ENCODE measurements at regions of chr10 and their contacts with region 1.

Region 1: GRCh38 chr10:11165591-11166543 is 148.2 kb downstream of the CELF2 start:
- DNase-seq: peak; percentile 42 to 92 (median 71)
- ATAC-seq: peak; percentile 62
- H3K4me3 ChIP-seq: peak overlapping the region; percentile 74 to 88
- H3K4me3 Mint-ChIP-seq: no peak overlapping the region
- H3K27ac ChIP-seq: peak overlapping the region; percentile 79 to 89
- H3K27ac Mint-ChIP-seq: no peak overlapping the region
- H3K4me1 ChIP-seq: peaks cover 53% of the 10 kb centered on the region
- H3K4me1 Mint-ChIP-seq: peaks cover 40% of the 10 kb centered on the region
- H3K27me3 ChIP-seq: no peaks in the 10 kb centered on the region
- H3K27me3 Mint-ChIP-seq: no peaks in the 10 kb centered on the region
- CTCF ChIP-seq: peak; percentile 75

Region 2: GRCh38 chr10:11145495-11145855 is 20.4 kb before region 1 on chr10:
- CTCF ChIA-PET with region 1: interaction called, 202 read pairs
- POLR2A ChIA-PET with region 1: interaction called, 319 read pairs
- intact Hi-C with region 1: loop called (anchors 1 kb)
- DNase-seq: peak in 8 of 9 experiments; percentile 61 to 90 (median 78)
- ATAC-seq: peak; percentile 62
- H3K4me3 ChIP-seq: peak overlapping the region; percentile 18 to 30
- H3K4me3 Mint-ChIP-seq: peak overlapping the region; percentile 66
- H3K27ac ChIP-seq: peak overlapping the region; percentile 53 to 88
- H3K27ac Mint-ChIP-seq: peak overlapping the region; percentile 95
- H3K4me1 ChIP-seq: peaks cover 96% of the 10 kb centered on the region
- H3K4me1 Mint-ChIP-seq: peaks cover 97% of the 10 kb centered on the region
- H3K27me3 ChIP-seq: no peaks in the 10 kb centered on the region
- H3K27me3 Mint-ChIP-seq: no peaks in the 10 kb centered on the region
- CTCF ChIP-seq: no peak

Region 3: GRCh38 chr10:11150879-11151415 is 14.9 kb before region 1 on chr10:
- CTCF ChIA-PET with region 1: interaction called, 202 read pairs
- POLR2A ChIA-PET with region 1: interaction called, 319 read pairs
- intact Hi-C with region 1: loop called (anchors 1 kb)
- DNase-seq: peak in 2 of 9 experiments; percentile 64 to 76
- ATAC-seq: no peak
- H3K4me3 ChIP-seq: peak overlapping the region; percentile 32 to 36
- H3K4me3 Mint-ChIP-seq: peak overlapping the region; percentile 69
- H3K27ac ChIP-seq: peak overlapping the region; percentile 88 to 89
- H3K27ac Mint-ChIP-seq: peak overlapping the region; percentile 95
- H3K4me1 ChIP-seq: peaks cover 99% of the 10 kb centered on the region
- H3K4me1 Mint-ChIP-seq: peaks cover 96% of the 10 kb centered on the region
- H3K27me3 ChIP-seq: no peaks in the 10 kb centered on the region
- H3K27me3 Mint-ChIP-seq: no peaks in the 10 kb centered on the region
- CTCF ChIP-seq: no peak

Region 4: DNA sequence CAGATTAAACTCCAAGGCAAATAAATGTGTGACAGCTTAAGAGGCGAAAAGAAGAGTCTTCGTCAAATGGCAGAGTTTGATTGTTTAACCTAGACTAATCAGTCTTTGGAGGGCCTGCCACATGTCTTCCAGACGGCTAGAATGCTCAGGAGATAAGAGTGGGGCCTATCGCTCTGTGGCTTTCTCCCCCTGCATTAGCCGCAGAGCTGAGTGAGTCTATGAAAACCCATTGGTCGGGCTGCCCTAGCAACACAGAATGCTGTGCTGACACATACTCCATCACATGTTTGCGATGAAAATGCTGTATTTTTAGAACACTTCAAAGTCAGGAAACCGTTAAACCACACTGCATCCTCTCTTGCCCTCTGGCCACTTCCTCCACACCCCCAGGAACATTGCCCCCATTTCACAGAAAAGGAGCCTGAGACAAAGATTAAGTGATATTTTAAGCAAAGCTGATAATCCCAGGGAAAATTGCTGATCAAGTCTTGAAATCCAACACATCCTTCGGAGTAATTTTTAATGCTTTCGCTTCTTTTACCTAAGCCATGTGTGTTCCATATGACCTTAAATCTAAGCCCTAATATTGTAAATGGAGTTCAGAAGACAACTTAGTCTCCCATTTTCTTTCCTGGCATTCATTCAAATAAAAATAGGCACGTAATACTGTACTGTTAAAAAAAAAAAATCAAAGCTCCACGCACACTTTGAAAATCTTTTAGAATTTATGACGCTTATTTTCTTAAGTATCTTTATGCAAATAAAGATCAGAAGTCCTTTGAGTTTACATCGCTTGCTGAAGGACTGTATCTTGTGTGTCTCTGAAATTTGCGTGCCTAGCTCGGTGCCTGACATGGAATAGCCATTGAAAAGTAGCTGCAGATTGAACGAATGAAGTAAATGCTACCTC is 13.0 kb after region 1 on chr10:
- CTCF ChIA-PET with region 1: interaction called, 23 read pairs
- POLR2A ChIA-PET with region 1: interaction called, 126 read pairs
- intact Hi-C with region 1: loop called (anchors 1 kb)
- DNase-seq: peak; percentile 66 to 96 (median 85)
- ATAC-seq: peak; percentile 70
- H3K4me3 ChIP-seq: peak overlapping the region; percentile 25 to 40
- H3K4me3 Mint-ChIP-seq: no peak overlapping the region
- H3K27ac ChIP-seq: peak overlapping the region; percentile 48 to 79
- H3K27ac Mint-ChIP-seq: no peak overlapping the region
- H3K4me1 ChIP-seq: peaks cover 100% of the 10 kb centered on the region
- H3K4me1 Mint-ChIP-seq: peaks cover under 1% of the 10 kb centered on the region
- H3K27me3 ChIP-seq: no peaks in the 10 kb centered on the region
- H3K27me3 Mint-ChIP-seq: no peaks in the 10 kb centered on the region
- CTCF ChIP-seq: no peak

Region 5: DNA sequence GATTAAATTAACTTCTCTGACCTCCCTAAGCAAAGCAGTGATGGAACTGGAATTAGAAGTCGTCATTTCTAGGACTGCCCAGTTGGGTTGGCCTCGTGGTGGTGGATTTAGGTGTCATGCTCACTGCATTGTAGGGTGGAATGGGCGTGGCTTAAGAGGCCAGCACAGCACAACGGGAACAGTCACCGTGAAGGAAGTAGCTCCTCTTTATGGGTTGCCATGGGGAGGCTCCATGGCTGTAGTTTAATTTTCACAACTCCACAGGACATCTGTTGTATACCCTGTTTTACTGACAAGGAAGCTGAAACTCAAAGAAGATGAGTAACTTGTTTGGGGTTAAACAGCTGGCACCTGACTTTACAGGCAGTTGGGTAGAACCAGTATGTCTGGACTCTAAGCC is 60.1 kb after region 1 on chr10:
- CTCF ChIA-PET with region 1: interaction called, 4 read pairs
- POLR2A ChIA-PET with region 1: interaction called, 13 read pairs
- intact Hi-C with region 1: no loop called
- DNase-seq: peak in 7 of 9 experiments; percentile 37 to 88 (median 61)
- ATAC-seq: peak; percentile 69
- H3K4me3 ChIP-seq: peak overlapping the region in 1 of 2 experiments; percentile 13
- H3K4me3 Mint-ChIP-seq: peak overlapping the region; percentile 69
- H3K27ac ChIP-seq: peak overlapping the region; percentile 41 to 78
- H3K27ac Mint-ChIP-seq: peak overlapping the region; percentile 98
- H3K4me1 ChIP-seq: peaks cover 75% of the 10 kb centered on the region
- H3K4me1 Mint-ChIP-seq: peaks cover 93% of the 10 kb centered on the region
- H3K27me3 ChIP-seq: no peaks in the 10 kb centered on the region
- H3K27me3 Mint-ChIP-seq: no peaks in the 10 kb centered on the region
- CTCF ChIP-seq: no peak

Region 6: DNA sequence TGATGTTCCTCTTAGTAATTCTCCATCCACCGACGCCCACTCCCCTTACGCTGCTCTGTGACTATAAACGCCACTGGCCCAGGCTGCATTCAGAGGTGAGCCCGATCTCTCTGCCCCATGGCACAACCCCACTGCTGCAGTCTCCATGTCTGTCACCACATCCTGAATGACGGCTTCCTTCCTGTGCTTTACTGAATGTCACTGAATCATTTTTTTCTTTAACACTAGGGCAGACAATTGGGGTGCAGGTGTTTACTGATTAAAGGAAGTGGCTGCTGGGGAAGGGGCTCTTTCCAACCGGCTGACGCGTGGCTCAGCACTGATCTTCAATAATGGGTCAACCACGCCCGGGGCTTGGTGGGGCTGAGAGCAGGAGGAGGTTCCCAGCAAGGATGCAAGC is 237.2 kb after region 1 on chr10:
- CTCF ChIA-PET with region 1: no interaction called
- POLR2A ChIA-PET with region 1: no interaction called
- intact Hi-C with region 1: loop called in 1 of 2 experiments (anchors 2 kb)
- DNase-seq: peak; percentile 23 to 88 (median 65)
- ATAC-seq: peak; percentile 92
- H3K4me3 ChIP-seq: peak overlapping the region in 1 of 2 experiments; percentile 10
- H3K4me3 Mint-ChIP-seq: peak overlapping the region; percentile 69
- H3K27ac ChIP-seq: peak overlapping the region; percentile 58 to 79
- H3K27ac Mint-ChIP-seq: peak overlapping the region; percentile 95
- H3K4me1 ChIP-seq: peaks cover 49% of the 10 kb centered on the region
- H3K4me1 Mint-ChIP-seq: peaks cover 81% of the 10 kb centered on the region
- H3K27me3 ChIP-seq: no peaks in the 10 kb centered on the region
- H3K27me3 Mint-ChIP-seq: no peaks in the 10 kb centered on the region
- CTCF ChIP-seq: no peak

Region 7: DNA sequence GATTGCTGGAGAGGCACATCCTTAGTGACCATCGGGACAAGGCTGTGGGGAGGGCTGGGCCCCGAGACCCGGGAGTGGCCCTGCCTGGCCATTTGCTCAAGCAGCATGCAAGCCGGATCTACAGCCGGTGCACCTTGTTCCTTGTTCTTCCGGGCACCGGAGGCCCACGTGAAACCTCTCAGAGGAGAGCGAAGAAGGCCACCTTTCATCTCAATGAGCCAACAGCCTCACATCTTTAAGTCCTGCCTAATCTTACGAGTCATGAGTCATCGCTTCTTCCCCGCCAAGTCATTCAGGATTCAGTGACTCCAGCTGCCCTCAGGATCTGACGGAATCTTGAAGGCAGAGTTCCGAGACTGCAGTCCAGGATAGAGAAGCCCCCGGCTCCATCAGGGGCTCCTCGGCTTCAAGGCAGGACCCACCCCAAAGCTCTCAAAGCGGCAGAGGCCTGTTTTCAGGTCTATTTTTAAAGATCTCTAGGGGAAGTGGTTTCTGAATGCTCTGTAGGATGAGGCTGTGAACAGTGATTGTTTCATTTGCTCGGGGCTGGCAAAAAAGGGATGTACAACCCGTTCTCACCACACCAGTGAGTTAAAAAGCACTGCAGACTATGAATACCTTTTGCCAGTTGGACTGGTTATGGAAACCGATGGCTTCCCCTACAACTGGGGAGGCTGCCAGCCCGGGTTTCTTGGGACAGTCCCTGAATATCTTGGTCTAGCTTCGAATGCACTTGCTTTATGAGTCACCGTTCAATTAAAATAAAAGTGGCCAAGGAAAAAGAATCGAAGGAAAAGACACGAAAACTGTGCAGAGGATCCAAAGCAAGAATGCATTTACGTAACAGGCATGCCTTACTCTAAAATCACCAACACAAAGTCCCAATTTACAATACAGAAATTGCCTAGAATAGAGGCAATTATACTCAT is 519.1 kb after region 1 on chr10:
- CTCF ChIA-PET with region 1: no interaction called
- POLR2A ChIA-PET with region 1: no interaction called
- intact Hi-C with region 1: loop called in 1 of 2 experiments (anchors 10 kb)
- DNase-seq: peak; percentile 24 to 86 (median 62)
- ATAC-seq: peak; percentile 81
- H3K4me3 ChIP-seq: peak overlapping the region; percentile 45 to 47
- H3K4me3 Mint-ChIP-seq: peak overlapping the region; percentile 86
- H3K27ac ChIP-seq: peak overlapping the region; percentile 79 to 90
- H3K27ac Mint-ChIP-seq: peak overlapping the region; percentile 98
- H3K4me1 ChIP-seq: peaks cover 56% of the 10 kb centered on the region
- H3K4me1 Mint-ChIP-seq: peaks cover 70% of the 10 kb centered on the region
- H3K27me3 ChIP-seq: no peaks in the 10 kb centered on the region
- H3K27me3 Mint-ChIP-seq: no peaks in the 10 kb centered on the region
- CTCF ChIP-seq: no peak

Measured in CD8-positive, alpha-beta T cell (primary cell).